Tibial artery (tissue), 4 donors: ENCODE measurements at regions of chr5 and their contacts with region 1.

Region 1: DNA sequence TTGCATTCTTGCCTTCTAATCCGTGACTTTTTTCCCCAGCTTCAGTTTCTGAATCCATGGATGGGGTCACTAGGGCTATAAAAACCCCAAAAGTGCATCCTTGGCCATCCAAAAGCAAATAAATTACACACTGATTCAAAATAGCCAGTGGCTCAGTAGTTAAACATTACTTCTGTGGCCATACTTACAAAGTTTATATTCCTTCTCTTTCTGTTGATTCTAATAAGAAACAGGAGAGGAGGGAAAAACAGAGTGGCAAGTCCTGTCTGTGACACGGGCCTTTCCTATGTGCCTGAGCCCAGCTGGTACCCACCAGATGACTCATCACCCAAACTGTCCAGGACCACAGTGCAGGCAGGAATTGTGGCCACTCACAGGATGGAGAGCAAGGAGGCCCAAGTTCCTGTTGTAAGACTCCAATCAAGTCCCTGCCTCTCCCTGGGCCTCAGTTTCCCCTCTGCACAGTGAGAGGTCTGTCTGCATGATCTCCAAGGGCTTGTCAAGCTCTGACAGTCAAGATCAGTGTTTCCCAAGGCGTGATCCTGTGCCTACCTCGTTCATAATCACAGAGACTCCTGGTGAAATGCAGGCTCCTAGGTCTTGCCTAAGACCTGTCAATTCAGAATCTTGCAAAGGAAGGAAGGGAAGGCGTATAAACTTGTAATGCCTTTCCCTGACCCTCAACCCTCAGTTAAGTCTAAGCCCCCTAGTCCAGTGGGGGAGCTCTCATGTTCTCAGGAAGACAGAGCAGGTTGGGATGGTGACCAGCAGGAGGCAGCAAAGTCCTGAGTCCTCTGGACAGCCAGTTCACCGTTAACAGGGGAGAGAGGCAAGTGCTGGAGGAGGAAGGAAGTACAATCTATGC is 29.5 kb downstream of the TNIP1 start:
- DNase-seq: peak; percentile 79 to 88
- H3K4me3 ChIP-seq: no peak overlapping the region
- H3K27ac ChIP-seq: no peak overlapping the region
- H3K4me1 ChIP-seq: peaks cover 0 to 7% (median 3%) of the 10 kb centered on the region in 4 donors
- H3K27me3 ChIP-seq: no peaks in the 10 kb centered on the region
- CTCF ChIP-seq: peak; percentile 82 to 90

Region 2: DNA sequence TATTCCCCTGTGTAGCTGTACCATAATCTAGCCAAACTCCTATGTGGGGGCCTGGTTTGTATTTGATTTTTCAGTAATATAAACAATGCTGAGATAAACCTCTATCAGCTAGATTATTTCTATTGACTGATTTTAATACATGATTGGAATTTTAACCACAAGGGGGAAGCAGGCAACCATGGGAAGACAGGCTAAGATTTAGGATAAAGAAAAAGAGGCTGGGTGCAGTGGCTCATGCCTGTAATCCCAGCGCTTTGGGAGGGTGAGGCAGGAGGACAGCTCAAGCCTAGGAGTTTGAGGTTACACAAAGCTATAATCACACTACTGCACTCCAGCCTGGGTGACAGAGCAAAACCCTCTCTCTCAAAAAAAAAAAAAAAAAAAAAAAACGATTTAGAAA is 49.0 kb before region 1 on chr5:
- intact Hi-C with region 1: loop called (anchors 5 kb)
- DNase-seq: no peak
- H3K4me3 ChIP-seq: no peak overlapping the region
- H3K27ac ChIP-seq: no peak overlapping the region
- H3K4me1 ChIP-seq: peaks cover 0 to 40% (median 33%) of the 10 kb centered on the region in 4 donors
- H3K27me3 ChIP-seq: no peaks in the 10 kb centered on the region
- CTCF ChIP-seq: peak; percentile 62 to 78